H1 (cell line): ENCODE measurements at regions of chr1 and their contacts with region 1.

Region 1: DNA sequence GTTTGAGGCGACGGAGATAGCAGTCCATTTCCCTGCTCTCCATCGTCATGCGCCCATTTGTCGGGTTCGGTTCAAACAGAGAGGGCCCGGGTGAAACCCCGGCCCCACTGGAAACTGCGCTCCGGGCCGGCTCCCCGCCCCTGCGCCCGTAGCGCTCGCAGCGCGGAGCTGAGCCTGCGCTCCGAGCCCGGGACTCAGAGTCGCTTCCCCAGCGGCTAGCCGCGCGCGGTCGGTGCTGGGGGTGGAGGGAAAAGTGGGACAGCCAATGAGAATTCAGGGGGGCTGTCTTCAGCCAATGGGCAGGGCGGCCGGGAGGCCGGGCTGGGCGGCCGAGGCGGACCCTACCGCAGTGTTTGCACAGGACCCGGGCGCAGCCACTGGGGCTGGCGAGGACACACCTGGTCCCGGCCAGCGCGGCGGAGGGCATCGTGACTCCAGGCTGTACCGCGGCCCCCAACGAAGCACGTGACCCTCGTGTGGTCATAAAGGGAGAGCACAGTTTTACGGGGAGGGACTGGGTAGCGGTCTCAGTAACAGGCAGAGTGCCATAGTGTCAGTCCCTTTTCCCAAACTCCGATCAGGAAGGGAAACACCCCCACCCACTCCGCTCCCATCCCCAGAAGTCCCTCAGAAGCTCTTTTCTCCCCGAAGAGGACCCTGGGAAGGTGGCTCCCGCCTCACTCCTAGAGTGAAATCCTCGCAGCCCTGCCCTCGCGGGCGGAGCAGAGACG is at the start of gene INKA2:
- DNase-seq: peak in 1 of 2 experiments; percentile 91
- H3K4me3 ChIP-seq: peak within 1 kb of the TSS; percentile 62 to 74 (median 71)
- H3K27ac ChIP-seq: peak within 1 kb of the TSS; percentile 38; the same call in 1 of the 2 replicates
- H3K4me1 ChIP-seq: peaks cover 19 to 27% (median 23%) of the 10 kb centered on the region in 4 experiments
- H3K27me3 ChIP-seq: peaks cover 0 to 6% (median 4%) of the 10 kb centered on the region in 4 experiments; a peak in 3 of 7 replicates
- CTCF ChIP-seq: no peak
- EP300 ChIP-seq: no peak
- POLR2A ChIP-seq: peak; percentile 37 to 64
- RAD21 ChIP-seq: no peak
- total RNA-seq, gene INKA2: 10.9 and 11.5 TPM in 2 replicates

Region 2: DNA sequence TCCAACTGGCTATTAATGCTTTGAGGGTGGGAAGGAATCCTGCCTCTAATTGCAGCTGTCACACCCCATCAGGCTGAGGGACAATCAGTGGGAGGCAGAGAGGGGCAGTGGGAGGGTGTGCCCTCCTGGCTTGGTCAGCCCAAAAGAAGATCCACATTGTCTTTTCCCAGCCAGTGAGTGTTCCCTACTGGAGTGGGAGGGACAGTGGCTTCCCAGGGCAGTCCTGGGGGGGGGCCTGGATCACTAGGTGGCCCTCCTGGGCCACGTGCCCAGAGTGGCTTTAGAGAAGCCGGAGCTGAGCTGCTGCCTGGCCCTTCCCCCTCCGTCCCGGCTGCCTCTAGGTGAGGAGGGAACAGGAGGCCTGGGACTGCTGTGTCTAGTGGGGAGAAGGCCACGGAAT is 14.2 kb before region 1 on chr1:
- CTCF ChIA-PET with region 1: interaction called, 1,070 read pairs
- POLR2A ChIA-PET with region 1: interaction called, 343 read pairs
- DNase-seq: peak in 1 of 2 experiments; percentile 53
- H3K4me3 ChIP-seq: no peak overlapping the region
- H3K27ac ChIP-seq: no peak overlapping the region
- H3K4me1 ChIP-seq: peaks cover 2 to 26% (median 14%) of the 10 kb centered on the region in 4 experiments
- H3K27me3 ChIP-seq: no peaks in the 10 kb centered on the region; a peak in 1 of 7 replicates
- CTCF ChIP-seq: no peak
- EP300 ChIP-seq: no peak
- POLR2A ChIP-seq: no peak
- RAD21 ChIP-seq: no peak

Region 3: GRCh38 chr1:111755331-111756123 is 16.2 kb after region 1 on chr1 and contains the start of gene DDX20:
- CTCF ChIA-PET with region 1: interaction called, 1,070 read pairs
- POLR2A ChIA-PET with region 1: interaction called, 47 read pairs
- DNase-seq: peak in 1 of 2 experiments; percentile 92
- H3K4me3 ChIP-seq: peak within 1 kb of the TSS; percentile 89 to 93 (median 91)
- H3K27ac ChIP-seq: peak within 1 kb of the TSS; percentile 86
- H3K4me1 ChIP-seq: peaks cover 0 to 3% (median 0%) of the 10 kb centered on the region in 4 experiments; a peak in 1 of 7 replicates
- H3K27me3 ChIP-seq: no peaks in the 10 kb centered on the region
- CTCF ChIP-seq: peak; percentile 67 to 84 (median 83)
- EP300 ChIP-seq: no peak
- POLR2A ChIP-seq: peak; percentile 78 to 91
- RAD21 ChIP-seq: peak; percentile 65 to 66
- total RNA-seq, gene DDX20: 24.7 and 25.4 TPM in 2 replicates

Region 4: DNA sequence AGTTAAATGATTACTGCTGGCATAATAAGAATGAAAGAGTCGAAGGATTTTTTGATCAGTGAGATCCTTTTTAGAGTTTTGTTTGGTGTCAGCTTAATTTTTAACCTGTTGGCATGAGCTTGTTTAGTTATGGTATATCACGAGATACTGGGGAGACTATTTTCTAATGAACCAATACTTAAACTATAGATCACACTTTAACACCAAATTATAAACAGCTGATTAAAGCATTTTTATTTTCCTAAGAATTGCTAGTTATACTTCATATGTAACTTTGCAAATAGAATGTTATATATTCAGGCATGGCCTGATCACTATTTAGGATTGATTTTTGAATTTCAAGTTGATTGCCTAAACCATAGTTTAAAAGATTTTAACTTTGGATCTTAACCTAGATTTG is 22.4 kb after region 1 on chr1:
- CTCF ChIA-PET with region 1: interaction called, 1,070 read pairs
- POLR2A ChIA-PET with region 1: interaction called, 47 read pairs
- DNase-seq: no peak
- H3K4me3 ChIP-seq: no peak overlapping the region
- H3K27ac ChIP-seq: no peak overlapping the region
- H3K4me1 ChIP-seq: peaks cover 0 to 3% (median 0%) of the 10 kb centered on the region in 4 experiments; a peak in 1 of 7 replicates
- H3K27me3 ChIP-seq: no peaks in the 10 kb centered on the region
- CTCF ChIP-seq: no peak
- EP300 ChIP-seq: no peak
- POLR2A ChIP-seq: no peak
- RAD21 ChIP-seq: no peak